Gastrocnemius medialis (tissue), 4 donors: ENCODE measurements at regions of chr7 and their contacts with region 1.

Region 1: DNA sequence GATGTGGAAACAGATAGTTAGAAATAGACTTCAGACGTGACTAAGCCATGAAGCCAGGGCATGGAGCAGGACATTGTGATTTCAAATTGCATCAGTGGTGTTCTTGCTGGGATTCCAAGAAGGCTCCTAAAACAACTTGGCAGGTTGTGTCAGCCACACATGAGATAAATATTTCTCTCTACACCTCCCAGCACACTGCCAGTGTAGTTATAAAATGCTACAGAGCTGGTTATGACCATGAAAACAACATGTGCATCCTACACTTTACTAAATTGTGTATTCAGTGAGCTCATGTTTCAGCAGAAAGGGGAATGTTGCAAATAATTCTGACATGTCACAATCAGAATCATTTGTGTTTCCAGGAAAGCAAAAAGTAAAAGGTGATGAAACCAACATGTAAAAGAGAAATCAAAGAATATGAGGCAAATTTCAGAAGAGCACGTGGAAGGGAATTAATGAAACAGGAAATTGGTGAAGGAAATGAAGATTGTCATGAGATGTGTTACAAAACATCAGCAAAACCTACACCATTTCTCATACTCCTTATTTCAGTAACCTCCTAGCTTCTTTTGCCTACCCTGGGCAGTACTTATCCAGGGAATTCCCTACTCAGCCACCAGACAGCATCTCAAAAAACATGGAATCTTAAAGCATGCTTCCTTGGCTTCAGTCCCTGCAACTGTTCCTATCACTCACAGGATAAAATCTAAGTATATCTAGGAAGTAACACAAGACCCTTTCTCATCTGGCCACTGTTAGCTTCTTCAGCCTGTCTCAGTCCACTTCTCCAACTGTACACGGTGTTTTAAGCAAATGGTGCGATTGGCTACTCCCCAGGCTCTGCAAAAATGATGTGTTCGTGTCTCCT is 5.8 kb upstream of the CYP3A7 start:
- DNase-seq: peak; percentile 67 to 79
- ATAC-seq: peak; percentile 97 to 98
- H3K4me3 ChIP-seq: no peak overlapping the region
- H3K27ac ChIP-seq: peak overlapping the region; percentile 78 to 84 (median 80)
- H3K4me1 ChIP-seq: peaks cover 24 to 30% of the 10 kb centered on the region in 2 donors
- H3K27me3 ChIP-seq: no peaks in the 10 kb centered on the region
- CTCF ChIP-seq: no peak
- POLR2A ChIP-seq: no peak

Region 2: GRCh38 chr7:99558306-99559174 is 182.3 kb before region 1 on chr7 and contains the start of gene ZNF655:
- in situ Hi-C with region 1: no loop called
- intact Hi-C with region 1: loop called (anchors 5 kb)
- DNase-seq: peak; percentile 91 to 92
- ATAC-seq: peak; percentile 86 to 92
- H3K4me3 ChIP-seq: peak within 1 kb of the TSS; percentile 82 to 94 (median 90)
- H3K27ac ChIP-seq: peak within 1 kb of the TSS; percentile 96 to 99 (median 98)
- H3K4me1 ChIP-seq: peaks cover 19 to 31% of the 10 kb centered on the region in 2 donors
- H3K27me3 ChIP-seq: no peaks in the 10 kb centered on the region
- CTCF ChIP-seq: no peak
- POLR2A ChIP-seq: peak; percentile 91 to 93
- total RNA-seq, gene ZNF655: 41.5 to 85.1 (median 56.5) TPM

Region 3: DNA sequence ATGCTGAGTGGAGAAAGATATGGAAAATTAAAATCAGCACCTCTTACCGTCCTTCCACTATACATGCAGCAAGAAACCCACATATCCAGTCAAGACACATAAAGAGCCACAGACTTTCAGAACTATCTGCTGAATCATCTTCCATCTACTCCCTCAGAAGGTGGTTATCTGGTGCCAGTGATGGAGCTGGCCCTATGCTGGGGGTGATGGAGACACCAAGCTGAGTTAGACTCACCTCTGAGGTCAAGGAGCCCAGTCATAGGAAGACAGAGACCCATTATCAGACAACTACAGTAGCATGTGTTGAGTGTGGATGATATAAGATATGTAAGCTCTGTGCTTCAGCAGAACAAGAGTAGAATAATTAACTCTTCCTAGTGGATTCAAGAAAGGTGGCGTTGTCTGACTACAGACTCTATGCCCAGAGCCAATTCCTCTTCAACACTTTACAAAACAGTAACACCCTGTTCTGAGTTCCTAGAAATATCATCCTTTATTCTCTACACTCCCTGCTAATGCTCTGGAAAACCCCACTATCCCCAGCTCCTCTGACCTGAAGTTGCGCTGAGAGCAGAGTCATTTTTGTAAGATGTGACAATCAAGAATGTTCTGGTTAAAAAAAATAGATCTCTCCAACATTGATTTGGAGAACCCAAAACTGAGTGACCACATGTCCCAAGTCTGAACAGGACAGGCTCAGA is 75.3 kb before region 1 on chr7:
- in situ Hi-C with region 1: no loop called
- intact Hi-C with region 1: no loop called
- DNase-seq: no peak
- ATAC-seq: no peak
- H3K4me3 ChIP-seq: no peak overlapping the region
- H3K27ac ChIP-seq: no peak overlapping the region
- H3K4me1 ChIP-seq: no peaks in the 10 kb centered on the region
- H3K27me3 ChIP-seq: no peaks in the 10 kb centered on the region
- CTCF ChIP-seq: no peak
- POLR2A ChIP-seq: no peak

Region 4: DNA sequence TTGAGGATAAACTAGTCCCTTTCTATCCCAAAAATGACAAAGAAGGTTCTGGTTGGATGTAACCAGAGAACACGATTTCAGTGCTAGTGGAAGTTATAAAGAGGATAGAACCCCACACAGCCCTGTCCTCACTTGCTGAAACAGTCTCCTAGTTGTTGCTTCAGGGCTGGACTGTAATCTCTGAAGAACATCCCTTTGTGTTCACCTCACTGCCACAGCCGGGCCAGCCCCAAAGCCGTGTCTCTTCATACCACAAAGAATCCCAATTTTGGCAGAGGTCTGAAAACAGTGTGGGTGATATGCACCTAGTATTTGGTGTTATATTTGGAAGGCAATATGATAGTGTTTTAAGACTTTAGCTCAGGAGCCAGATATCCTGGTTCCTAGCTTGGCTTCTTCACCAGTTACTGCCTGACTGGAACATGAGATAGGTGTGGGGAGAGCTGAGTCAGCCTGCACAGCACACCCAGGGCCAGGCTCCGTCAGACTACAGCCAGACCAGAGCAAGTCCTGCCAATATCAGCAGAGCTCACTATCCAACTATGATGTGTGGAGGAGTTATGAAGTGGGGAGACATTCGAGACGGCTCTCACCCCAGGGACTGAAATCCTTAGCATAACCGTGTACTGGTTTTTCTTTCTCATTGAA is 22.0 kb after region 1 on chr7:
- in situ Hi-C with region 1: no loop called
- intact Hi-C with region 1: loop called (anchors 1 kb)
- DNase-seq: peak; percentile 86 to 91
- ATAC-seq: peak; percentile 97 to 98
- H3K4me3 ChIP-seq: no peak overlapping the region
- H3K27ac ChIP-seq: peak overlapping the region; percentile 76 to 81 (median 79)
- H3K4me1 ChIP-seq: peaks cover 13 to 16% of the 10 kb centered on the region in 2 donors
- H3K27me3 ChIP-seq: no peaks in the 10 kb centered on the region
- CTCF ChIP-seq: no peak
- POLR2A ChIP-seq: peak in 1 of 2 donors; percentile 15

Region 5: DNA sequence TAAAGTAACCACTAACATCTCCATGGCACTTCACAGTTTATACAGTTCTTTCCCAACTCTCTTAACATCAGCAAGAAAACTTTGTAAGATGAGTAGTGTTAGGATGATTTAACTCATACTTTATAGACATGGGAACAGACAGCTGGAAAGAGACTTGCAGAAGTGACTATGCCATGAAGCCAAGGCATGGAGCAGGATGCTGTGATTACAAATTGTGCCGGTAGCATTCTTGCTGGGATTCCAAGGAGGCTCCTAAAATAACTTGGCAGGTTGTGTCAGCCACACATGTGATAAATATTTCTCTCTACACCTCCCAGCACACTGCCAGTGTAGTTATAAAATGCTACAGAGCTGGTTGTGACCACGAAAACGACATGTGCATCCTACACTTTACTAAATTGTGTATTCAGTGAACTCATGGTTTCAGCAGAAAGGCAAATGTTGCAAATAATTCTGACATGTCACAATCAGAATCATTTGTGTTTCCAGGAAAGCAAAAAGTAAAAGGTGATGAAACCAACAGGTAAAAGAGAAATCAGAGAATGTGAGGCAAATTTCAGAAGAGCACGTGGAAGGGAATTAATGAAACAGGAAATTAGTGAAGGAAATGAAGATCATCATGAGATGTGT is 48.7 kb after region 1 on chr7:
- in situ Hi-C with region 1: no loop called
- intact Hi-C with region 1: loop called (anchors 2 kb)
- DNase-seq: peak; percentile 13 to 33
- ATAC-seq: peak; percentile 82 to 88
- H3K4me3 ChIP-seq: no peak overlapping the region
- H3K27ac ChIP-seq: peak overlapping the region in 2 of 4 donors; percentile 18 to 28
- H3K4me1 ChIP-seq: peaks cover 16 to 23% of the 10 kb centered on the region in 2 donors
- H3K27me3 ChIP-seq: no peaks in the 10 kb centered on the region
- CTCF ChIP-seq: no peak
- POLR2A ChIP-seq: no peak

Region 6: DNA sequence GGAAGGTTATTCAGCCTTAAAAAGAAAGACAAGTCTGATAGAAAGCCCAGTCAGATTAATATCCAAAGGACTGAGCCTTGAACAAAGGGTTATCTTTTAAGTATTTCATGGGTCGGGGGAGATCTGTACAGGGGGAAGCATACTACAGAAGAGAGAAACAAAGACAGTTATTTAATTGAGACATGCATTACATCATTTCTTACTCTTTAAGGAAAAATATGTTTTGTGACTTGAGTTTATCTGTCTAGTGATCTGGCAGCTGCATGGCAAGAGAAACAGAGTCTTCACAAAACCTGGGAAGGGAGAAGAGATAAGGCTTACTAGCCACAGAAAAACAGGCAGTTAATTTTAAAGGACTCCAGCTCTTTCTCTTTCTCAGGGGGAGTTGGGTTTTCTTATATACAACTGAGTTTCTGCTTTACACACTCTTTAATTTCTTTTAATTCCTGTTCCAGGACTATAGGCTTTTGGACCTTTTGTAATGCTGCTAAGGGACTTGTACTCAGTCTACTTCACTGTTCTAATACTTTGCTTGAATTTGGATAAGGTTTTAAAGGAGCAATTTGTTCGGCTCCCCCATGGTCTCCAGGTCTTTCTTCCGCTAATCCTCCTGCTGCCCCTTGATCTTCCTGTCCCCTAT is 66.2 kb after region 1 on chr7:
- in situ Hi-C with region 1: no loop called
- intact Hi-C with region 1: no loop called
- DNase-seq: no peak
- ATAC-seq: no peak
- H3K4me3 ChIP-seq: no peak overlapping the region
- H3K27ac ChIP-seq: no peak overlapping the region
- H3K4me1 ChIP-seq: no peaks in the 10 kb centered on the region
- H3K27me3 ChIP-seq: no peaks in the 10 kb centered on the region
- CTCF ChIP-seq: no peak
- POLR2A ChIP-seq: no peak